ENCODE measurements at regions of chr1 and their contacts with region 1.

Region 1: GRCh38 chr1:26472901-26473845 is 933 bp downstream of the HMGN2 start:
- DNase-seq: peak; percentile 98 to 99 (median 98)
- ATAC-seq: peak; percentile 80
- H3K4me3 ChIP-seq: peak overlapping the region; percentile 95
- H3K27ac ChIP-seq: peak overlapping the region; percentile 100
- H3K4me1 ChIP-seq: peaks cover 29 to 30% of the 10 kb centered on the region in 2 experiments; a peak in 4 of 5 replicates
- H3K27me3 ChIP-seq: no peaks in the 10 kb centered on the region
- CTCF ChIP-seq: no peak
- EP300 ChIP-seq: peak; percentile 48
- POLR2A ChIP-seq: no peak
- RAD21 ChIP-seq: no peak

Region 2: DNA sequence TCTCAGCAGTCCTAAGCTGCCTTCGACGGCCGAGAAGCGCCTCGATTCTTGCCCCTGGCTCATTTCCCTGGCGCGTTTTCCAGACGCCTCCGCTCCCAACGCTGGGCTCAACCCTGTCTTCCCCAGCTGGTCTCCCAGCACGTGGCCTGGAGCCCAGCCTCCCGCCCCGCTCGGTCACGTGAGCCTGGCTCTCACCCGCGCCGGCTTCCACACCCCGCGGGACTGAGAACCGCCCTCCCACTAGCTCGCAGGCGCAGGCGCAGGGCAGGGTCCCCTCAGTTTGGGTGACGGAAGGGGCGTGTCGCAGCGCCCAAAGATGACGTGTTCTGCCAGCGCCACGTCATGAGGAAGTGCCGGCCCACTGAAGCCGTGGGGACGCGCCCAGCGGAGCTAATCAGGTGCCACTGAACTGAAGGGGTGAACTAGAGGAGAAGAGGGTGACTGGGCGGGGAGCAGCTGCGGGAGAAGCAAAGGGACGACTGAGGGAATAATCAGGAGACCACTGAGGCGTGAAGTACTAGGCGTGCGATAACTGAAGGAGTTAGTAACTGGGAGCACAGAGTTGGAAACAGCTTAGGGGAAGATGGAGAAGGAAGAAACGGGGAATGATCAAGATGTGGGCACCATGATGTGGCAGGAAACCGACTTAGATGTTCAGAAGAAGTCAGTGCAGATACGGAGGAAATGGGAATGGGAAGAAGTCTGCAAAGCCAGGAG is 41.0 kb before region 1 on chr1 and contains the start of gene DHDDS:
- CTCF ChIA-PET with region 1: no interaction called
- POLR2A ChIA-PET with region 1: interaction called, 13 read pairs
- in situ Hi-C with region 1: no loop called
- intact Hi-C with region 1: no loop called
- DNase-seq: peak; percentile 99 to 100 (median 100)
- ATAC-seq: peak; percentile 99
- H3K4me3 ChIP-seq: peak within 1 kb of the TSS; percentile 70
- H3K27ac ChIP-seq: peak within 1 kb of the TSS; percentile 81
- H3K4me1 ChIP-seq: peaks cover 7 to 16% of the 10 kb centered on the region in 2 experiments; a peak in 4 of 5 replicates
- H3K27me3 ChIP-seq: no peaks in the 10 kb centered on the region
- CTCF ChIP-seq: no peak
- EP300 ChIP-seq: 0 out of 2 replicates have a peak, but pooled peaks have one; percentile 34
- POLR2A ChIP-seq: peak; percentile 98
- RAD21 ChIP-seq: no peak
- polyA plus RNA-seq, gene DHDDS: 33.3 to 44.3 TPM

Region 3: DNA sequence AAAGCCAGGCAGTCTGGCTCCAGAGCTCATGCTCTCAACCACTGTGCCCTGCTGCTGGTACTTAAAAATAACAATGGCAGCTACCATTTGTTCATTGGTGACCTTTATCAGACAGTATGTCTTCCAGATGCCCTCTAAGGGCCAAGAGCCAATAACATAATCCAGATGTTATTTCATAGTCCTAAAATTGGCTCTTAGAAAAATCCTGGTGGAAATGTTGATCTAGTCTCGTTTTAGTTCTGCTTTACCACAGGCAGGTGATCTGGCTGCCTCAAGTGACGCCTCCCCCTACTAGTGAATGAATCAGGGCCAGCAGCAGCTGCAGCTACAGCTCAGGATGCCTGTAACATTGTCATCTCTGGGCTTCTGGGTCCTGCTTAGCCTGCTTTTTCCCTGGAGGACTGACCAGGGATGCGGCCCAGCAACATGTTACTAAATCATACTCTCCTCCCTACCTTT is 13.6 kb before region 1 on chr1:
- CTCF ChIA-PET with region 1: no interaction called
- POLR2A ChIA-PET with region 1: interaction called, 11 read pairs
- in situ Hi-C with region 1: no loop called
- intact Hi-C with region 1: no loop called
- DNase-seq: no peak
- ATAC-seq: no peak
- H3K4me3 ChIP-seq: no peak overlapping the region
- H3K27ac ChIP-seq: no peak overlapping the region
- H3K4me1 ChIP-seq: no peaks in the 10 kb centered on the region
- H3K27me3 ChIP-seq: no peaks in the 10 kb centered on the region
- CTCF ChIP-seq: no peak
- EP300 ChIP-seq: no peak
- POLR2A ChIP-seq: no peak
- RAD21 ChIP-seq: no peak

Measured in K562 (cell line).